Heart right ventricle (tissue), 16 donors: ENCODE measurements at regions of chr11 and their contacts with region 1.

Region 1: GRCh38 chr11:30454132-30454531 is 131.2 kb downstream of the ARL14EP start:
- DNase-seq: no peak
- ATAC-seq: peak in 6 of 8 donors; percentile 43 to 78 (median 65)
- H3K4me3 ChIP-seq: no peak overlapping the region
- H3K27ac ChIP-seq: peak overlapping the region in 4 of 10 donors; percentile 46 to 54 (median 52)
- H3K4me1 ChIP-seq: peaks cover 7 to 76% (median 42%) of the 10 kb centered on the region in 9 donors
- H3K27me3 ChIP-seq: no peaks in the 10 kb centered on the region
- CTCF ChIP-seq: no peak

Region 2: GRCh38 chr11:30196400-30197206 is 257.5 kb before region 1 on chr11:
- intact Hi-C with region 1: no loop called
- DNase-seq: peak; percentile 48 to 62
- ATAC-seq: peak in 6 of 8 donors; percentile 61 to 90 (median 80)
- H3K4me3 ChIP-seq: no peak overlapping the region
- H3K27ac ChIP-seq: no peak overlapping the region
- H3K4me1 ChIP-seq: no peaks in the 10 kb centered on the region
- H3K27me3 ChIP-seq: no peaks in the 10 kb centered on the region
- CTCF ChIP-seq: peak; percentile 52 to 81 (median 74)

Region 3: DNA sequence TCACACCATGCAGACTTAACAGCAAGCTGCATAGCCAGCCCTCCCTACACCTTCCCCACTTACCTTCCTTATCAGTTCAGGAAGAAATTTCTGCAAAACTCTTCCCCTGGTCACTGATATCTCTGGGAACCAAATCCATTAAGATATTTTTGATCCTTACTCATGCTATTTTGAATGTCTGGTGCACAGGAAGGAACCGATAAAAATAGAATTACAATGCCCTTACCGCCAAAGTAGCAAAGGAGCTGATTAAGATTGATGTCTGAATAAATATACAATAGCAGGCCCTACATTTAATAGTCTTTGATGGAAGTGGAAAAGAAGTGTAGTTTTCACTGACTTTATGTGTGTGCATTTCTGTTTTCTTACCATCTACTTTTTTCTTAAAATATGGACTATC is 14.7 kb after region 1 on chr11:
- intact Hi-C with region 1: loop called in 1 of 10 experiments (anchors 2 kb)
- DNase-seq: no peak
- ATAC-seq: peak in 6 of 8 donors; percentile 25 to 72 (median 56)
- H3K4me3 ChIP-seq: no peak overlapping the region
- H3K27ac ChIP-seq: peak overlapping the region in 3 of 10 donors; percentile 17 to 49 (median 48)
- H3K4me1 ChIP-seq: peaks cover 0 to 45% (median 17%) of the 10 kb centered on the region in 9 donors
- H3K27me3 ChIP-seq: no peaks in the 10 kb centered on the region
- CTCF ChIP-seq: no peak